HEK293 (cell line): ENCODE measurements at regions of chr16 and their contacts with region 1.

Region 1: GRCh38 chr16:68520649-68521086 is 18.4 kb upstream of the ZFP90 start:
- H3K4me3 ChIP-seq: no peak overlapping the region; the same call in 1 of the 2 replicates
- H3K27ac ChIP-seq: no peak overlapping the region
- H3K4me1 ChIP-seq: no peaks in the 10 kb centered on the region
- CTCF ChIP-seq: peak; percentile 95

Region 2: DNA sequence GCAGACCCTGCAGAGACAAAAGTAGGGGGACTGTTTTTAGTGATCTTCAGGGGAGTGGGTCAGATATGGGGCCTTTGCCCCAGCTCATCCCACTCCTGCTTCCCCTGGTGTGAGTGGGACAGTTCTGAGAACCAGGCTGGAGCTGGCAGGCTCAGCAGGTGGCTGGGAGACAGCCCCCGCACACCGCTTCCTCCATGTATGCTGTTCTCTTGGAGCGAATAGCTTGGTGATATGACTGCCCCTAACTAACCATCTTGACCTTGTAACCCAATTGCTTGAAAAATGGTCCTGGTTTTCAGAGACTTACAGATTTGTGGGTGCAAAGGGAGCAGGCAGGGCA is 148.3 kb before region 1 on chr16:
- CTCF ChIA-PET with region 1: no interaction called
- POLR2A ChIA-PET with region 1: no interaction called
- H3K4me3 ChIP-seq: no peak overlapping the region
- H3K27ac ChIP-seq: no peak overlapping the region
- H3K4me1 ChIP-seq: no peaks in the 10 kb centered on the region
- CTCF ChIP-seq: no peak

Region 3: DNA sequence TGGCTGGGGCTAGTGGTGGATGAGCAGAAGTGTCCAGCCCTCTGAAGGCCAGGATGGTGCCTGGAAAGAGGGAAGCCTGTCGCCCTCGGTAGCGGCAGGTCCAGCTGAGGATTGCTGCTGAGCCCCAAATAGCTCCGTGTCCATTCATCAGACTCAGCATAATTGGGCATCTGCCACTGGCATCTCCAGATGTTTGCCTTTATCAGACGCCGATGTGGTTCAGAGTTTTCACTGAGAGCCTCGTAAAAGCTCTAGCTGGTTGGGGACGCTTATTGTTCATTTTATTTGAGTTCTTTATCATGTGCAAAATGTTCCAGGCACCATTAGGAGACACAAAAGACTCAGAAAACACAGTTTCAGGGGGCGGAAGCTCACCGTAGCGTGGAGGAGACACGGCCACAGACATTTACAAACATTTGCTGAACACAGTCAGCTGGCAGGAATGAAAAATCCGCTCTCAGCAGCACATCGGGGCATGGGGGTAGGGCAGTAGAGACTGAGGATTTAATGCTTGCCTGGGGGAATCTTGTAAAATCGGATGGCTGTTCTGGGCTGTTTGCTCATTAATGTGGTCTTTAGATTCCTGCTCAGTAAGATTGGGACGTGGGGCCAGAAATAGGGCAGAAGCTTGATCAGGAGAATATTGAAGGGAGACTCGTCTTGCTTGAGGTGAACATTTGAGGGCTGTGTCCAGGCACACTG is 114.1 kb before region 1 on chr16:
- CTCF ChIA-PET with region 1: interaction called, 12 read pairs
- POLR2A ChIA-PET with region 1: no interaction called
- H3K4me3 ChIP-seq: peak overlapping the region; percentile 1; the same call in 1 of the 2 replicates
- H3K27ac ChIP-seq: peak overlapping the region; percentile 29; the same call in 1 of the 2 replicates
- H3K4me1 ChIP-seq: no peaks in the 10 kb centered on the region
- CTCF ChIP-seq: no peak

Region 4: DNA sequence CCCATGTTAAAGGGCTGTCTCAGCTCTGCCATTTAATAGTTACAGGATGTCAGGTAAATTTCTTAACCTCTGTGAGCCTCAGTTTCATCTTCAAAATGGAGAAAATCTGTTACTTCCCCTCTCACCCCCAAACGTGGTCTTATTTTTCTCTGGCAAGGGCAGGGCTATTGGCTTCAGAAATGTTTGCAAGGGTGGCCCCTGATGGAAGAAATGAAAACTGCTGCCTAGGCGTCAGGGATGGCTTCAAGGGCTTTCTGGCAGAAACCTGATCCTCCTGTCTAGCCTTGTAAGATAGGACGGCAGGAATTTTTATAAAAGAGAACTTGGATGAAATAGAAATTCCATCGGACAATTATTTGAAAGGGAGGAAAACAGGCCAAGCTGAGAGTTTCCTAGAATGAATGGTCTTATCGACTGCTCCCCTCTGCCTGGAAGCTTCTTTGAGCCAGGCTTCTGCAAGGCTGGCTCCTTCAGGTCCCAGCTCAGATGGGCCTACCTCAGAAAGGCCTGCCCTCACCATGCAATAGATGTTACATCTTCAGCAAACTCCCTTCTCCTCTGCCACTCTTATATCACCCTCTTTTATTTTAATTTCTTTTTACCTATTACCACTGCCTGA is 279.7 kb after region 1 on chr16:
- CTCF ChIA-PET with region 1: interaction called, 10 read pairs
- POLR2A ChIA-PET with region 1: no interaction called
- H3K4me3 ChIP-seq: no peak overlapping the region
- H3K27ac ChIP-seq: no peak overlapping the region
- H3K4me1 ChIP-seq: no peaks in the 10 kb centered on the region
- CTCF ChIP-seq: 0 out of 2 replicates have a peak, but pooled peaks have one; percentile 14